ENCODE measurements at regions of chr15 and their contacts with region 1.

Region 1: DNA sequence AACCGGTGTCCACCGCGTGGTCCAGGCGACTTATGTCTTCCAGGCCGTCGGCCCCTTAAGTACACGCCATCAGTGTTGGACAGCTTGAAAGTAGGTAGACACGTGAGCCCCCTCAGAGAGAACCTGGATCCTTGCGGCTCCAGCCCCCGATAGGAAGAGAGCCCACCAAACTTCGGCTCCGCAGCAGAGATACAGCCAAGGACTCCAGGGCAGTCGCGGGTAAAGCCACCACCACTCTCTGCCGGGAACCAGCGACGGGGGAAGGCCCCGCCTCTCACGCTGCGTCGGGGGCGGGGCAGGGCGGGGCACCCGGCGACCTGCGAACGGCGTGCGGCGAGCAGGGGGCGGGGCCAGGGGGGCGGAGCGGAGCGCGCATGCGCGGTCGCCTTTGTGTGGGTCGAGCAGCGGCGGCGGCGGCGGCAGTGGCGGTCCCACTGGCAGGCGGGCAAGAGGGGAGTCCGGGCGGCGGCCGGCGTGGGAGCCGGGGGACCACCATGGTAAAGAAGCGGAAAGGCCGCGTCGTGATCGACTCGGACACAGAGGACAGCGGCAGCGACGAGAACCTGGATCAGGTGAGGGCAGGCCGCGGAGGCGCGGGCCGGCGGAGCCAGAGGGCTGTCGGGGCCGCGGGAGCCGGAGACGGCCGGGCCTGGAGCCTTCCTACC is at the start of gene RTF1:
- DNase-seq: peak; percentile 97
- ATAC-seq: peak; percentile 98
- H3K4me3 ChIP-seq: peak within 1 kb of the TSS; percentile 70 to 90 (median 86)
- H3K4me3 Mint-ChIP-seq: peak within 1 kb of the TSS; percentile 97
- H3K27ac ChIP-seq: peak within 1 kb of the TSS; percentile 55 to 83
- H3K27ac Mint-ChIP-seq: peak within 1 kb of the TSS; percentile 93
- H3K4me1 ChIP-seq: peaks cover 14 to 24% of the 10 kb centered on the region in 2 donors
- H3K4me1 Mint-ChIP-seq: peaks cover 37% of the 10 kb centered on the region
- H3K27me3 ChIP-seq: no peaks in the 10 kb centered on the region
- H3K27me3 Mint-ChIP-seq: no peaks in the 10 kb centered on the region
- CTCF ChIP-seq: no peak
- total RNA-seq, gene RTF1: 39.4 and 45.0 TPM in 2 replicates

Region 2: GRCh38 chr15:40807028-40807887 is 609.6 kb before region 1 on chr15 and contains the starts of genes DNAJC17 and ZFYVE19:
- CTCF ChIA-PET with region 1: no interaction called
- POLR2A ChIA-PET with region 1: no interaction called
- intact Hi-C with region 1: loop called (anchors 5 kb)
- DNase-seq: peak; percentile 97
- ATAC-seq: peak; percentile 96
- H3K4me3 ChIP-seq: peak within 1 kb of the TSS; percentile 78 to 100 (median 100)
- H3K4me3 Mint-ChIP-seq: peak within 1 kb of the TSS; percentile 99
- H3K27ac ChIP-seq: peak within 1 kb of the TSS; percentile 86 to 95
- H3K27ac Mint-ChIP-seq: peak within 1 kb of the TSS; percentile 98
- H3K4me1 ChIP-seq: peaks cover 12 to 18% of the 10 kb centered on the region in 2 donors
- H3K4me1 Mint-ChIP-seq: peaks cover 24% of the 10 kb centered on the region
- H3K27me3 ChIP-seq: no peaks in the 10 kb centered on the region
- H3K27me3 Mint-ChIP-seq: no peaks in the 10 kb centered on the region
- CTCF ChIP-seq: peak; percentile 11
- total RNA-seq, gene DNAJC17: 46.1 and 52.3 TPM in 2 replicates
- total RNA-seq, gene ZFYVE19: 29.4 and 29.8 TPM in 2 replicates

Region 3: GRCh38 chr15:41230650-41231533 is 186.0 kb before region 1 on chr15 and contains the starts of genes CHP1 and EXD1:
- CTCF ChIA-PET with region 1: no interaction called
- POLR2A ChIA-PET with region 1: no interaction called
- intact Hi-C with region 1: loop called (anchors 5 kb)
- DNase-seq: peak; percentile 97
- ATAC-seq: peak; percentile 97
- H3K4me3 ChIP-seq: peak within 1 kb of the TSS; percentile 80 to 94 (median 88)
- H3K4me3 Mint-ChIP-seq: peak within 1 kb of the TSS; percentile 95
- H3K27ac ChIP-seq: peak within 1 kb of the TSS; percentile 81 to 88
- H3K27ac Mint-ChIP-seq: peak within 1 kb of the TSS; percentile 95
- H3K4me1 ChIP-seq: peaks cover 18 to 24% of the 10 kb centered on the region in 2 donors
- H3K4me1 Mint-ChIP-seq: peaks cover 30% of the 10 kb centered on the region
- H3K27me3 ChIP-seq: no peaks in the 10 kb centered on the region
- H3K27me3 Mint-ChIP-seq: no peaks in the 10 kb centered on the region
- CTCF ChIP-seq: peak; percentile 95
- total RNA-seq, gene CHP1: 39.9 and 40.8 TPM in 2 replicates
- total RNA-seq, gene EXD1: not detected in 2 replicates

Region 4: GRCh38 chr15:41291065-41291631 is 125.7 kb before region 1 on chr15:
- CTCF ChIA-PET with region 1: no interaction called
- POLR2A ChIA-PET with region 1: no interaction called
- intact Hi-C with region 1: loop called (anchors 1 kb)
- DNase-seq: peak; percentile 89
- ATAC-seq: peak; percentile 95
- H3K4me3 ChIP-seq: peak overlapping the region in 1 of 5 experiments; percentile 12
- H3K4me3 Mint-ChIP-seq: peak overlapping the region; percentile 68
- H3K27ac ChIP-seq: peak overlapping the region; percentile 73 to 91
- H3K27ac Mint-ChIP-seq: peak overlapping the region; percentile 93
- H3K4me1 ChIP-seq: peaks cover 24 to 35% of the 10 kb centered on the region in 2 donors
- H3K4me1 Mint-ChIP-seq: peaks cover 45% of the 10 kb centered on the region
- H3K27me3 ChIP-seq: no peaks in the 10 kb centered on the region
- H3K27me3 Mint-ChIP-seq: no peaks in the 10 kb centered on the region
- CTCF ChIP-seq: no peak

Region 5: GRCh38 chr15:41401904-41402267 is 15.0 kb before region 1 on chr15:
- CTCF ChIA-PET with region 1: interaction called, 3 read pairs
- POLR2A ChIA-PET with region 1: no interaction called
- intact Hi-C with region 1: loop called (anchors 1 kb)
- DNase-seq: no peak
- ATAC-seq: peak; percentile 8
- H3K4me3 ChIP-seq: peak overlapping the region; percentile 76 to 97 (median 86)
- H3K4me3 Mint-ChIP-seq: peak overlapping the region; percentile 98
- H3K27ac ChIP-seq: peak overlapping the region; percentile 71 to 91
- H3K27ac Mint-ChIP-seq: peak overlapping the region; percentile 99
- H3K4me1 ChIP-seq: peaks cover 8 to 17% of the 10 kb centered on the region in 2 donors
- H3K4me1 Mint-ChIP-seq: peaks cover 21% of the 10 kb centered on the region
- H3K27me3 ChIP-seq: no peaks in the 10 kb centered on the region
- H3K27me3 Mint-ChIP-seq: no peaks in the 10 kb centered on the region
- CTCF ChIP-seq: no peak

Region 6: DNA sequence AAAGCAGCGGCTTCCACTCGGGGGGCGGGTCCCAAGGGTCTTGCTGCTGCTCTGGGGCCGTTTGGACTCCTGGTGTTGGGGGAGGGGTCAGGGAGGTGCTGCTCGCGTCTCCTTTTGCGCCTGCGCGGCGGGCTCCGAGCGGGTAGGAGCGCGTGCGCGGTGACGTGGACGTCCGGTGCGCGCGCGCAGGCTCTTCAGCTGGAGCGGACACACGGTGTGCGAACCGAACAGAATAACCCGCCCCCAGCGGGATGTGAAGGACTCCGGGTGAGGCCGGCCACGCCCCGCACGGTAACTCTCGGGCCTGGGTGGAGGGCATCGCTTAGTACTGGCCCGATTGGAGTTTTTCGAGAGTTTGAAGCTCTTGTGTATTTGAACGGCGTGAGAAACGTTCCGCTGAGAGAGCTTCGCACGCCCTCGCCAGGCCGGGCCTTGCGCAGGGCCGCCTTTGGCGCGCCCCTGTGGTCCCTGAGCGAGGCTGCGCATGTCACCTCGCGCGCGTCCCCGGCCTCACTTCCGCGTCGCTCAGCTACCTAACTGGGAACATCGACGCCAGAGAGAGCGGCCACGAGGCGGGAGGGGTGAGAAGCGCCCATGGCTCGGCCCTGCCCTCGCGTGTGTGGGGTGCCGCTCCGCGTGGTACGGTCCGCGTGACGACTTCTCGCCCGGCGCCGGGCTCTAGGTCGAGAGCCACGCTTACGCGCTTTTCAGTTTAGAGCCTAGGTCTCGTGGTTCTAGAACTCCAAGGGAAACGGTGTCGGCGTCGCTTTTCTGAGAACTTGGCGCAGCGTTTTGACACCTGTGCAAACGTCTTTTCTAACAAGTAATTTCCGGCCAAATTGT is 243.6 kb after region 1 on chr15 and contains the start of gene MGA:
- CTCF ChIA-PET with region 1: no interaction called
- POLR2A ChIA-PET with region 1: no interaction called
- intact Hi-C with region 1: loop called (anchors 2 kb)
- DNase-seq: peak; percentile 98
- ATAC-seq: peak; percentile 80
- H3K4me3 ChIP-seq: peak within 1 kb of the TSS; percentile 58 to 72 (median 63)
- H3K4me3 Mint-ChIP-seq: peak within 1 kb of the TSS; percentile 89
- H3K27ac ChIP-seq: peak within 1 kb of the TSS; percentile 94 to 95
- H3K27ac Mint-ChIP-seq: peak within 1 kb of the TSS; percentile 96
- H3K4me1 ChIP-seq: peaks cover 26 to 28% of the 10 kb centered on the region in 2 donors
- H3K4me1 Mint-ChIP-seq: peaks cover 44% of the 10 kb centered on the region
- H3K27me3 ChIP-seq: no peaks in the 10 kb centered on the region
- H3K27me3 Mint-ChIP-seq: no peaks in the 10 kb centered on the region
- CTCF ChIP-seq: no peak
- total RNA-seq, gene MGA: 77.2 and 79.7 TPM in 2 replicates

Region 7: DNA sequence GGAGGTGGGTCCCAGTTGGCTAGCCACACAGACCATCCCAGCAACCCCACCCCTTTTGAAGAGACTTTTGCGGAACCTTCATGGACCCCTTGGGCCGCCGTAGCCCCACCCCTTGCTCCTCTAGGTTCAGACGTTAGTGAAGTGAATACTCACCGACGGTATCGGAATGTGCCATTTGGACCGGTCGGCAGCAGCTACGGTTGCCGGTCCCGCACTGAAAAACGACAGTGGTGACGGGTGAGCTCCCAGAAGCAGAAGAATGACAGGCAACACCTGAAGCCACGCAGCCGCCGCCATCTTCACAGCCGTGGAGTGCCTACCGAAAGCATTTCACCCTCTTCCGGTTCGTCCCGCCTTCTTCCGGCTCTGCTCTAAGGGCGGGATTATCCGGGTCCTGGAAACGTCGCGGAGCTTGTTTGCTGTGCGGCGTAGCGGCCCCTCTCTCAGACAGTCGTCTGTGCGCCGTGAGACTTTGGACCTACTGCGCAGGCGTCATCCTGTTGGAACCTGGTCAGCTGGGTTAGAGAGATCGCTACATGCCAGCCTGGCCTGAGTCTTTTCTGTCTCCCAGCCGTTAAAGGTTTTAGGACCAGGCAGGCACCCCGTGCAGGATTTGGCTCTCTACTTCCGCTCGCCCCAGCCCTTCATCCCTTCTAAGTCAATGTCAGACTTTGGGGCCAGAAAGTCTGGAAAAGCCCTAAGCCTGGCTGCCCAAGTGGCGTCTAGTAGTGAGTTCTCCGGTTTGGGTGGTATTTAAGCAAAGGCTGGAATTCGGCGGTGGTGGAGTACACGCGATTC is 856.4 kb after region 1 on chr15 and contains the starts of genes GANC and TMEM87A:
- CTCF ChIA-PET with region 1: no interaction called
- POLR2A ChIA-PET with region 1: no interaction called
- intact Hi-C with region 1: loop called (anchors 5 kb)
- DNase-seq: peak; percentile 97
- ATAC-seq: peak; percentile 87
- H3K4me3 ChIP-seq: peak within 1 kb of the TSS; percentile 88 to 100 (median 88)
- H3K4me3 Mint-ChIP-seq: peak within 1 kb of the TSS; percentile 90
- H3K27ac ChIP-seq: peak within 1 kb of the TSS; percentile 87 to 88
- H3K27ac Mint-ChIP-seq: peak within 1 kb of the TSS; percentile 99
- H3K4me1 ChIP-seq: peaks cover 26 to 28% of the 10 kb centered on the region in 2 donors
- H3K4me1 Mint-ChIP-seq: peaks cover 55% of the 10 kb centered on the region
- H3K27me3 ChIP-seq: no peaks in the 10 kb centered on the region
- H3K27me3 Mint-ChIP-seq: no peaks in the 10 kb centered on the region
- CTCF ChIP-seq: no peak
- total RNA-seq, gene GANC: 122 and 131 TPM in 2 replicates
- total RNA-seq, gene TMEM87A: 61.0 and 61.5 TPM in 2 replicates